ENCODE measurements at regions of chr4 and their contacts with region 1.

Region 1: DNA sequence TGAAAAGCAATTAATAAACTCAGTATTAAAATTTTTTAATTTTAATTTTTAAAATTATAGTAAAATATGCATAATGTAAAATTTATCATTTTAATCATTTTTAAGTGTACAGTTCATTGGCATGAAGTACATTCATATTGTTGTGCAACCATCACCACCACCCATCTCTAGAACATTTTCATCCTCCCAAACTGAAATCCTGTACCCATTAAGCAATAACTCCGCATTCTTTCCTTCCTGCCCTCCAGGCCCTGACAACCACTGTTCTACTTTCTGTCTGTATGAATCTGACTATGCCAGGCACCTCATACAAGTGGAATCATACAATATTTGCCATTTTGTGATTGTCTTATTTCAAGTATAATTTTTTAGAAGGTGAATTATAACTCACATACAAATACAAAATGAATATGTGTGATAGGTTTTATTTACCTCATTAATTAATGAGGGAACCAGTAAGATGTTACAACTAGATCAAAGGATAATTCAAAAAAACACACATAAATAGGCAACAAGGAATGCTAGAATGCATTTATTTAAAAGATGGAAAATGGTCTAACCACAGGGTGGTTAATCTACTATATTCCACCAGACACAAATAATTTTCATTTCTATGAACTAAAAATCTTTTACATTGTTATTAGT is 13.1 kb upstream of the AFF1 start:
- DNase-seq: no peak
- ATAC-seq: no peak
- H3K4me3 Mint-ChIP-seq: no peak overlapping the region
- H3K27ac Mint-ChIP-seq: no peak overlapping the region
- H3K4me1 Mint-ChIP-seq: peaks cover 0 to 3% (median 2%) of the 10 kb centered on the region in 4 donors
- H3K27me3 Mint-ChIP-seq: no peaks in the 10 kb centered on the region

Region 2: DNA sequence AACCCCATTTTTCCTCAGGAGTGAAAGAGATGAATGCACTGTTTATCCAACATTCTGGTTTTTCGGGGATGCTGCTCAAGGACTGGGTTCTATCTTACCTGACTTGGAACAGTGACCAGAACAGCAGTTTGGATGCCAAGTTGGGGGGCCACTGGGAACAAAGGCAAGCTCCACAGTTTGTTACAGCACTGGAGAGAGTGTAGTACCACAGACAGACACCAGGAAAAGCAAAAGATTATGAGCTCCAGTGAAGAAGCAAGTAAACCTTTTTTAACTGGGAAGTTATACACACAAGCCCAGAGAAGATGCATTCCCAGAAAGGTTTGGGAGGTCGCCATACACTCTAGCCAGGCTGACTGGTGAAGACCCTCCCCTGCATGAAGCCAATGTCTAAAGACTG is 43.1 kb before region 1 on chr4:
- POLR2A ChIA-PET with region 1: no interaction called
- DNase-seq: no peak
- ATAC-seq: no peak
- H3K4me3 Mint-ChIP-seq: no peak overlapping the region
- H3K27ac Mint-ChIP-seq: no peak overlapping the region
- H3K4me1 Mint-ChIP-seq: no peaks in the 10 kb centered on the region
- H3K27me3 Mint-ChIP-seq: no peaks in the 10 kb centered on the region

Region 3: DNA sequence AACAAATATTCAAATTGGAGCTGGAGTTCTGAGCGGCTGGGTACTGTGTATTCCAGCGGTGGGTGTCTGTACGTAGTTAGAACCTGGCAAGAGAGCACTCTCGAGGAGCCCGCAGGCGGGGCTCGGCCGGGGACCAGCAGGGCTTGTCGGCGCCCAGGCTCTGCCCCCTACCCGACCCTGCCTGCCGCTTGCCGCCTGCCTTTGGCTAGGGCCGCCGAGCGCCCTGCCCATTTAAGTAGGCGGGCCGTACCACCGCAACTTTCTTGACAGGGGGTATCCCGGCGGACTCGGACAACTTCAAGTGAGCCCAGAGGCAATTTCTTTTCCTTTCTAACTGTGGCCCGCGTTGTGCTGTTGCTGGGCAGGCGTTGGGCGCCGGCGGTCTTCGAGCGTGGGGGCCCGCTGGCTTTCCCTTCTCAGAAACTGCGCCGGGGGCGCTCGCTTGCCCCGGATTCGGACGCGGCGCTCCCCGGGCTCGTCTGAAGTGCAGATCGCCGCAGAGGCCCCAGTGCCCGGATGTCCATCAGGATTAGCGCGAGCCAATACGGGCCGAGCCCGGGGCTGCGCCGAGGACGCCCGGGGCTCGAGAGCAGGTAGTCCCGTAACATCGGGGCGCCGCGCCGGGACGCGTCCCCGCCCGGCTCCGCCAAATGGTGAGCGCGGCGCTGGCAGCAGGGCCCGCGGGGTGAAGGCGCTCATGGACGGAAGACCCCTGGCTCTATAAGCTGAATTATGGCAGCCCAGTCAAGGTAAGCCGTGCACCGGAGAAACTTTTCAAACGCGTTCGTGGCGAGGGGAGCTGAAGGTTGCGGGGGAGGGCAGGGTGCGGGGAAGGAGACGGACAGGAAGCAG is 85.2 kb after region 1 on chr4:
- POLR2A ChIA-PET with region 1: interaction called, 10 read pairs
- DNase-seq: peak; percentile 83 to 94 (median 89)
- ATAC-seq: peak; percentile 85
- H3K4me3 Mint-ChIP-seq: peak overlapping the region; percentile 84 to 97 (median 96)
- H3K27ac Mint-ChIP-seq: peak overlapping the region; percentile 94 to 100 (median 98)
- H3K4me1 Mint-ChIP-seq: peaks cover 30 to 59% (median 51%) of the 10 kb centered on the region in 4 donors
- H3K27me3 Mint-ChIP-seq: no peaks in the 10 kb centered on the region

Region 4: GRCh38 chr4:87093443-87094123 is 171.9 kb after region 1 on chr4:
- POLR2A ChIA-PET with region 1: interaction called, 12 read pairs
- DNase-seq: peak in 9 of 10 donors; percentile 9 to 65 (median 42)
- ATAC-seq: peak; percentile 86 to 92
- H3K4me3 Mint-ChIP-seq: no peak overlapping the region
- H3K27ac Mint-ChIP-seq: peak overlapping the region; percentile 37 to 87 (median 68)
- H3K4me1 Mint-ChIP-seq: peaks cover 13 to 29% (median 18%) of the 10 kb centered on the region in 4 donors
- H3K27me3 Mint-ChIP-seq: no peaks in the 10 kb centered on the region

Measured in naive thymus-derived CD8-positive, alpha-beta T cell (primary cell).